ENCODE measurements at regions of chr3 and their contacts with region 1.

Region 1: GRCh38 chr3:57158813-57159738 is 6.1 kb downstream of the IL17RD start:
- DNase-seq: peak; percentile 59
- ATAC-seq: peak; percentile 57
- H3K4me3 Mint-ChIP-seq: no peak overlapping the region
- H3K27ac Mint-ChIP-seq: no peak overlapping the region
- H3K4me1 Mint-ChIP-seq: peaks cover 20% of the 10 kb centered on the region
- H3K27me3 Mint-ChIP-seq: peaks cover 54% of the 10 kb centered on the region

Region 2: DNA sequence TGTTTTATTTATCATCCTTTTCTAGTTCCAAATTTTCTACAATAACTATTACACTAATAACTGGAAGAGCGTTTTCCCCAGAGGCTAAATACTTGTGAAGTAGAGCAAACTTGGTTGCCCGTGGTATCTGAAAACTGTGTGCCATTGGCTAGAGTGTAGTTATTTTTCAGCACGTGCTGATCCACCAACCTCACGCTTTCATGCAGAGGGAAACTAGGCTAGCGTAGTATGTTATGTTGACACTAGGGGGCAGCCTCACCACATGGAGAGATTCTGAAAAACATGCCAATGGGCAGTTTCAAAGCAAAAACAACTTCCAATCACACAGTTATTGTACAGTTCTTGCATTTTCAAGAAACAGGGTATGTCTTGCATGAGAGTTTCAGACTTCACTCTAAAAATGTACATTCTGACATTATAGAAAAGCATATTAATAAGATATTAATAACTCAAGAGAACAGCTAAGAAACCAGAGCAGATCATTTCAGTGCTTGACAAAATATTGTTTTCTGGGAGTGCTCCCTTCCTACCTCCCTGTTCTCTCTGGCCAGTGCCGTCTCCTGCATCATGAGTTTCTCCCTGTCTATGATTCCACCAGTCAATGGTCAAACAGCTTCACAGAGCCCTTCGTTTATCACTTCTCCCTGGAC is 58.9 kb before region 1 on chr3:
- CTCF ChIA-PET with region 1: interaction called, 13 read pairs
- POLR2A ChIA-PET with region 1: no interaction called
- DNase-seq: peak; percentile 76
- ATAC-seq: peak; percentile 85
- H3K4me3 Mint-ChIP-seq: no peak overlapping the region
- H3K27ac Mint-ChIP-seq: no peak overlapping the region
- H3K4me1 Mint-ChIP-seq: no peaks in the 10 kb centered on the region
- H3K27me3 Mint-ChIP-seq: peaks cover 10% of the 10 kb centered on the region

Region 3: DNA sequence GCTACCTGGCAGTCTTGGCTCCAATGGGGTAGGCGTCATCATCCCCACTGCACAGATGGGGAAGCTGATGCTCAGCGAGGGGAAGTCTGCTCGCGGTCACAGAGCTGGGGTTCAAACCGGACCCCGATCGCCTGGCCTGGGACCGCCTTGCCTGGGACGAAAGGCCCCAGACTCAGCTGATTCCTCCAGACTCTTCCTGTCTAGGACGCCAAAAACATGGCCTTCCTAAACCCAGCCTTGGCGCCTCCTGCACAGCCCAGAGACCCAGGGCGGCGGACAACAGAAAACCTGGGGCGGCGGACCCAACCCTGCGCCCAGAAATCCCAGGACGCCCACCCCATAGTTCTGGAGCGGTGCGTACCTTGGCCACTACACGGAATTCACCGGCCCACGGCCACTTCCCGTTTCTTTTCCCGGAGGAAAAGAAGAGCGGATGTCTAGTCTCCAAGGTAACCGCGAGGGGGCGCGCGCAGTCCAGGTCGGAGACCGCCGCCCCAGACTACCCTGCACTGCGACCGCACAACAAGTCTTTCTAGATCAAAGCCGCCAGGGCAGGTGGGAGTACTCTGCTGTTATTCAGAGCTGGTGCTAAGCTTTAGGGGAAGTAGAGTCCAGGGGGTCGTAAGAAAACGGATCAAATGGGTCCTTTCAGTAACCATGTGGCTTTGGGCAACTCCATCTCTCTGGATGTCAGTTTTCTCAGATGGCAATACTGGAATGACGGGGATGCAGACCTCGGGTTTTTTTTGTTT is 11.0 kb after region 1 on chr3:
- CTCF ChIA-PET with region 1: interaction called, 18 read pairs
- POLR2A ChIA-PET with region 1: no interaction called
- DNase-seq: peak; percentile 74
- ATAC-seq: peak; percentile 87
- H3K4me3 Mint-ChIP-seq: peak overlapping the region; percentile 61
- H3K27ac Mint-ChIP-seq: no peak overlapping the region
- H3K4me1 Mint-ChIP-seq: peaks cover 4% of the 10 kb centered on the region
- H3K27me3 Mint-ChIP-seq: peaks cover 53% of the 10 kb centered on the region

Region 4: GRCh38 chr3:57227204-57227929 is 68.3 kb after region 1 on chr3 and contains the start of gene APPL1:
- CTCF ChIA-PET with region 1: no interaction called
- POLR2A ChIA-PET with region 1: no interaction called
- DNase-seq: peak; percentile 90
- ATAC-seq: peak; percentile 97
- H3K4me3 Mint-ChIP-seq: peak within 1 kb of the TSS; percentile 86
- H3K27ac Mint-ChIP-seq: peak within 1 kb of the TSS; percentile 80
- H3K4me1 Mint-ChIP-seq: peaks cover 33% of the 10 kb centered on the region
- H3K27me3 Mint-ChIP-seq: no peaks in the 10 kb centered on the region
- total RNA-seq, gene APPL1: 36.6 to 37.3 TPM

Measured in activated CD8-positive, alpha-beta T cell treated with anti-CD3 and anti-CD28 coated beads, Interleukin-2, amount 10 ng/mL, durations not matched to agents 7 days and 5 days (primary cell).